A549 (cell line): ENCODE measurements at regions of chr14 and their contacts with region 1.

Region 1: DNA sequence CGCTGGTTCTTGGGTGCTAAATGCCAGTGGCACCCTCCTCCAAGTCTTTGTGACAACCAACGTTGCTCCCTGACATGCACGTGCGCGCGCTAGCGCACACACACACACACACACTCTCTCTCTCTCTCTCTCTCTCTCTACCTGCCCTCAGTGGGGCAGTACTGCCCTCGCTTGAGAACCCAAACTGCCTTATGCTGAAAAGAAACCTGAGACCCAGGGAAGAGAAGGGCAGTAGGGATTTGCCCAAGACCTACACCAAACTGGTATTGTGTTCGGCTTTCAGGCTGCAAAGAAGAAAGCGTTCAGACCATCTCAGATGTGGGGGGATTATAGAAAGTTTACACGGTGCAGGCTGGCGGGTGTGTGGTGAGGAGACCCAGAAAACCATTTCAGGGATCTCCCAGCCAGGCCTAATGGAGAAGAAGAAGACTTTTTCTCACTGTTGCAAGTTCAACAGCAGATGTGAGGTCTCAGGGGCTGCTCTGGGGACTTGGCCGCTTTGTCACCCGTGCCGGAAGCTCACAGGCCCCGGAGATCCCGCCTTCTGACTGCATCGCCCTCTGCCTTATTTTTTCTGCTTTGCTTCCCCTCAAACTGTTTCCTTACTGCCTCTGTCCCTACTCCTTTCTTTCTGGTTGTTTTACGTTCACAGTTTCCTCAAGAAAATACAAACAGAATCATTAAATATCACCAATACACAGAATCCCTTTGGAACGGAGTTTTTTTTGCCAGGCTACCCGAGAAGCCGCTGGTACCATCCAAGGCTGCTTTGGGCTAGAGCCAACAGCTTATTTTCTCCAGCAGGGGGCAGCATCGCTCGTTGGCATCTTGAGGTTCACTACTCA is 82.4 kb downstream of the PPM1A start:
- DNase-seq: peak; percentile 38 to 72
- ATAC-seq: peak; percentile 76 to 87
- H3K4me3 ChIP-seq: peak overlapping the region; percentile 42
- H3K27ac ChIP-seq: peak overlapping the region; percentile 52 to 76; a peak in 5 of 6 replicates
- H3K4me1 ChIP-seq: 0 out of 3 replicates have a peak, but pooled peaks cover 5% of the 10 kb centered on the region
- CTCF ChIP-seq: peak; percentile 83
- EP300 ChIP-seq: no peak
- POLR2A ChIP-seq: no peak
- RAD21 ChIP-seq: peak; percentile 44 to 60; a peak in 3 of 5 replicates

Region 2: DNA sequence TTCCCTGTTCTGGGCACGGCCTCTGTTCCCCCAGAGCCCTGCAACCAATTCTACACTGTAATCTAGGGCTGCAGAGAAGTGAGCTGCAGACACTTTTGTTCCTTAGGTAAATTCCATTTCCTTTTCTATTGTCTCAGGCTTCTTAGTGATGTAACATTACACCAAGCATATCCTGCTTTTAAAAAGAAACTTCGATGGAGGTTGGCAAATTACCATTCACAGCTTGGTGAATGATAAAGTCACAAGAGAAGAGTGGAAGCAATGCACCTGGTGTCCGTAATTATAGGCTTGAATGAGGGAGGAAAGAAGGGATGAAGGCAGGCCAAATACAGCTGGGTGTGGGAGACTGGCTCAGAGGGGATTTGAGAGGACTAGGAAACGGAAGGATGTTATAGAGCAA is 13.8 kb before region 1 on chr14:
- CTCF ChIA-PET with region 1: interaction called, 12 read pairs
- POLR2A ChIA-PET with region 1: no interaction called
- DNase-seq: no peak
- ATAC-seq: no peak
- H3K4me3 ChIP-seq: no peak overlapping the region
- H3K27ac ChIP-seq: no peak overlapping the region
- H3K4me1 ChIP-seq: no peaks in the 10 kb centered on the region
- CTCF ChIP-seq: no peak
- EP300 ChIP-seq: no peak
- POLR2A ChIP-seq: no peak
- RAD21 ChIP-seq: no peak

Region 3: GRCh38 chr14:60775296-60775695 is 443.9 kb after region 1 on chr14:
- CTCF ChIA-PET with region 1: no interaction called
- POLR2A ChIA-PET with region 1: no interaction called
- DNase-seq: no peak
- ATAC-seq: peak in 1 of 2 experiments; percentile 53; a peak in 3 of 6 replicates
- H3K4me3 ChIP-seq: no peak overlapping the region
- H3K27ac ChIP-seq: no peak overlapping the region
- H3K4me1 ChIP-seq: peaks cover 22% of the 10 kb centered on the region; the same call in 2 of the 3 replicates
- CTCF ChIP-seq: no peak
- EP300 ChIP-seq: no peak
- POLR2A ChIP-seq: no peak
- RAD21 ChIP-seq: no peak